ENCODE measurements at regions of chr4 and their contacts with region 1.

Region 1: GRCh38 chr4:48085821-48086607 is 48.0 kb downstream of the TXK start:
- DNase-seq: no peak
- ATAC-seq: no peak

Region 2: GRCh38 chr4:47926639-47927258 is 159.3 kb before region 1 on chr4:
- intact Hi-C with region 1: loop called (anchors 5 kb)
- DNase-seq: no peak
- ATAC-seq: peak; percentile 88

Region 3: DNA sequence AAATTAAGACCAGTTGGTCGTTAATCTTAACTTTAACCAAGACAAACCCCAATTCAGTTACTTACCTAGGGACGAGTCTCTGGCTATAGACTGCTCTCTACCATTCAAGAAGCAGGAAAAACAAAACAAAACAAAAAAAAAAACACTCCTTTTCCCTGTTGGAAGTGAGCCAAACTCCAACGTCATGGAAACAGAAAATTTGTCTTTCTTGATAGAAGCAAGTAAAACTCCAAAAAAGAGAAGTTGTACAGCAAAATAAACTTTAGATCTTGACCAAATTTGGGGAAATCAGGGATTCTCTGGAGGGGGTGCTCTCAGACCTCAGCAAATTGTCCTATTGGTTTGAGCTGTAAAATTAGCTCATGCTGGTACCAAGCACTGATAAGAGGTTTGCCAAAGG is 73.2 kb before region 1 on chr4:
- intact Hi-C with region 1: loop called (anchors 5 kb)
- DNase-seq: no peak
- ATAC-seq: no peak

Measured in Right ventricle myocardium superior (tissue), 1 donor.